ENCODE measurements at regions of chr4 and their contacts with region 1.

Region 1: GRCh38 chr4:18767921-18768320 is 746.4 kb upstream of the LCORL start:
- DNase-seq: no peak
- H3K4me3 Mint-ChIP-seq: no peak overlapping the region
- H3K27ac Mint-ChIP-seq: no peak overlapping the region
- H3K4me1 Mint-ChIP-seq: no peaks in the 10 kb centered on the region
- H3K27me3 Mint-ChIP-seq: peaks cover 2% of the 10 kb centered on the region

Region 2: GRCh38 chr4:18695733-18696527 is 72.0 kb before region 1 on chr4:
- CTCF ChIA-PET with region 1: no interaction called
- intact Hi-C with region 1: loop called (anchors 10 kb)
- DNase-seq: no peak
- H3K4me3 Mint-ChIP-seq: no peak overlapping the region
- H3K27ac Mint-ChIP-seq: no peak overlapping the region
- H3K4me1 Mint-ChIP-seq: no peaks in the 10 kb centered on the region
- H3K27me3 Mint-ChIP-seq: peaks cover 13% of the 10 kb centered on the region

Region 3: DNA sequence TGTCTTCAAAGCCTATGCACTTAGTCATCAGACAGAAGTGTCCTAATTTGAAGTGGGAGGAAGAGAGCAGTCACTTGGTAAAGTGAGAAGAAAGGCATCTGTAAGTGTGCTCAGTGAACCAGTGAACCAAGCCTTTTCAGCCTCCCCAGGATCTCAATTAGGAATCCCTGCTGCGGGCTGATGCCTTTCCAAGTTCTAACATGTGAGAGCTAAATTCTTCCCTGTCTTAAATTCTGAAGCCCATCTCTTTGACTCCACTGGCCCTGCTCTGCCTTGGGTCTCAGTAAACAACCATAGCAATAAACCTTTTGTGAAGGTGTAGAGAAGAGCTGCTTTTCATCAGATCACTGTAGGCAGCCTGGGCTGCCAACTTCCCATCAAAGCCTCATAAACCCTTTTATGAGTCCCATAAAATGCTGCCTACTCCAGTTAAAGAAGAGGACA is 45.2 kb before region 1 on chr4:
- CTCF ChIA-PET with region 1: no interaction called
- intact Hi-C with region 1: no loop called
- DNase-seq: no peak
- H3K4me3 Mint-ChIP-seq: no peak overlapping the region
- H3K27ac Mint-ChIP-seq: no peak overlapping the region
- H3K4me1 Mint-ChIP-seq: no peaks in the 10 kb centered on the region
- H3K27me3 Mint-ChIP-seq: peaks cover 2% of the 10 kb centered on the region

Measured in activated naive CD4-positive, alpha-beta T cell treated with anti-CD3 and anti-CD28 coated beads for 36 hours (primary cell).